Mucosa of descending colon (tissue), 3 donors: ENCODE measurements at regions of chr4 and their contacts with region 1.

Region 1: DNA sequence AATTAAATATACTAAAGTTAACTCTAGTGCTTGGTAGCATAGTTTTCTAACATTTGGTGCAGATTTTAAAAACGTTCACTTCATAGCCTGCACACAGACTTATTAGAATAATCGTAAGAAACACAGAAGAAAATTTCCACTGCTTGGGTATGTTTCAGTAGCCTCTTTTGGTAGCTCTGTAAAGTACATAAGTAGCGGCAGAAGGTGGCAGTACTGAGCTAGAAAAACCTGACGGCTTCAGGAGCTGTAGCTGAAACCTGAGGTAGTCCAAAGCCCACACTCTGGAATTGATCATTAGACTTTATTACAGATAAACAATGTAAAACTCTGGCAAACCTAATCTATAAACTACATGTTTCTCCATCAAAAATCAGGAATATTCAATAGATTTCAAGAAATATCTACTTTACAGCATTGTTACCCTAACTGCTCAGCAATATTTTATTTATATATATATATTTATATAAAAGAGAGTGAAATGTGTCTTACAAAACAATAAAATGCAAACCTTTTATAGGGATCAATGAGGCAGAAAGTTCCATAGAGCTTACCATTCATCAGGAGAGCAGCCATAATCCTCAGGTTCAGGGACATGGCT is 88.2 kb downstream of the ATP8A1 start:
- DNase-seq: peak in 1 of 3 donors; percentile 91
- ATAC-seq: peak; percentile 86
- H3K4me3 ChIP-seq: no peak overlapping the region
- H3K4me1 ChIP-seq: no peaks in the 10 kb centered on the region
- CTCF ChIP-seq: peak; percentile 40

Region 2: DNA sequence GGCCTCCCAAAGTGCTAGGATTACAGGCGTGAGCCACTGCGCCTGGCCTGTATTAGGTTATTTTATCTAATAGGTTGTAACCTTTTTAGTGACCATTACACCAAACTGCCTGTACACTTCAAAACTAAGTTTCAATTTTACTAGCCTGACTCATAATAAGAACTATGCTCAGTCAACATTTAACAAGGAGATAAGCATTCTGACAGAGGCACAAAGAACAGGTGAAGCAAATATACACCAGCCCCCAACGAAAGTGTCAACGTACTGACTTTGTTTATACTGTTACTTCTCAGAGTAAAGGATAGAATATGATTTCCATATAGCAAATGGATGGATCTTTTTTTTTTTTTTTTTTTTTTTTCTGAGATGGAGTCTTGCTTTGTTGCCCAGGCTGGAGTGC is 108.7 kb before region 1 on chr4:
- intact Hi-C with region 1: no loop called
- DNase-seq: no peak
- ATAC-seq: peak; percentile 88
- H3K4me3 ChIP-seq: no peak overlapping the region
- H3K4me1 ChIP-seq: no peaks in the 10 kb centered on the region
- CTCF ChIP-seq: no peak

Region 3: GRCh38 chr4:42865572-42866189 is 297.0 kb after region 1 on chr4:
- intact Hi-C with region 1: loop called (anchors 5 kb)
- DNase-seq: peak in 1 of 3 donors; percentile 81
- ATAC-seq: peak; percentile 57
- H3K4me3 ChIP-seq: no peak overlapping the region
- H3K4me1 ChIP-seq: no peaks in the 10 kb centered on the region
- CTCF ChIP-seq: peak; percentile 32